ENCODE measurements at regions of chr9 and their contacts with region 1.

Region 1: DNA sequence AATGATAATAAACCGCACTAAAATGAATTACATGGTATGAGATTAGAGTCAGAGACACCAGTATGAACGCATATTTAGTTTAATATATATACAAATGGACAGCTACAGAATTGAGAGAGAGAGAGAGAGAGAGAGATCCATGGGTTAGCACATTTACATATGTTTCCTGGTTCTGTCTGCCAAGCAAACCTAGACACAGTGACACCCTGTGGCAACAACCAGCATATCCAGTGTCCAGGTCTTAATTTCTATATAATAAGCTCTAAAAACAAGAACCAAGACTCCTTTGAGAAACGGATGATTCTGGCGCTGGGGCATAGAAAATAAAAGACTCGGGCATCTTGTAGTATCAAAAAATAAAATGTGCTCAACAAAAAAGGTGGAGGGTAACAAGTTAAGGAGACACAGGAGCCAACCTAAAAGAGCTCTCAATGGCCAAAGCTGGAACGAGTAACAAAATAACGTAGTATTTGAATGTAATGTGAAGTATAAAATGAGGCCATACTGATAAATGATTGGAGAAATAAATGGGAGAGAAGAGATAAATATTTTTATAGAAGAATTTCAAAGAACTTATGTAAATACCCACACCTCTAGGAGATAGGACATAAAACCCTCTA is 84.5 kb downstream of the RFX3 start:
- DNase-seq: peak in 1 of 2 donors; percentile 17
- ATAC-seq: peak in 1 of 2 donors; percentile 61
- H3K4me3 ChIP-seq: no peak overlapping the region
- H3K27ac ChIP-seq: no peak overlapping the region
- H3K4me1 ChIP-seq: peaks cover 6 to 9% of the 10 kb centered on the region in 2 donors
- H3K27me3 ChIP-seq: no peaks in the 10 kb centered on the region
- CTCF ChIP-seq: peak in 4 of 5 experiments; percentile 15 to 45 (median 38)
- POLR2A ChIP-seq: no peak

Region 2: GRCh38 chr9:3240656-3241268 is 200.5 kb before region 1 on chr9:
- in situ Hi-C with region 1: loop called in 1 of 4 experiments (anchors 25 kb)
- intact Hi-C with region 1: loop called (anchors 2 kb)
- DNase-seq: peak; percentile 15 to 34
- ATAC-seq: peak; percentile 45 to 77
- H3K4me3 ChIP-seq: no peak overlapping the region
- H3K27ac ChIP-seq: no peak overlapping the region
- H3K4me1 ChIP-seq: no peaks in the 10 kb centered on the region
- H3K27me3 ChIP-seq: no peaks in the 10 kb centered on the region
- CTCF ChIP-seq: peak; percentile 33 to 67 (median 56)
- POLR2A ChIP-seq: no peak

Region 3: GRCh38 chr9:3331817-3332216 is 109.5 kb before region 1 on chr9:
- in situ Hi-C with region 1: no loop called
- intact Hi-C with region 1: loop called (anchors 5 kb)
- DNase-seq: no peak
- ATAC-seq: no peak
- H3K4me3 ChIP-seq: no peak overlapping the region
- H3K27ac ChIP-seq: no peak overlapping the region
- H3K4me1 ChIP-seq: peaks cover 0 to under 1% of the 10 kb centered on the region in 2 donors
- H3K27me3 ChIP-seq: no peaks in the 10 kb centered on the region
- CTCF ChIP-seq: peak in 1 of 5 experiments; percentile 9
- POLR2A ChIP-seq: no peak

Region 4: GRCh38 chr9:3346549-3346948 is 94.8 kb before region 1 on chr9:
- in situ Hi-C with region 1: no loop called
- intact Hi-C with region 1: loop called (anchors 5 kb)
- DNase-seq: no peak
- ATAC-seq: no peak
- H3K4me3 ChIP-seq: no peak overlapping the region
- H3K27ac ChIP-seq: no peak overlapping the region
- H3K4me1 ChIP-seq: peaks cover 5% of the 10 kb centered on the region in 2 donors
- H3K27me3 ChIP-seq: no peaks in the 10 kb centered on the region
- CTCF ChIP-seq: no peak
- POLR2A ChIP-seq: no peak

Measured in gastrocnemius medialis (tissue), 4 donors.